ENCODE measurements at regions of chr10 and their contacts with region 1.

Region 1: DNA sequence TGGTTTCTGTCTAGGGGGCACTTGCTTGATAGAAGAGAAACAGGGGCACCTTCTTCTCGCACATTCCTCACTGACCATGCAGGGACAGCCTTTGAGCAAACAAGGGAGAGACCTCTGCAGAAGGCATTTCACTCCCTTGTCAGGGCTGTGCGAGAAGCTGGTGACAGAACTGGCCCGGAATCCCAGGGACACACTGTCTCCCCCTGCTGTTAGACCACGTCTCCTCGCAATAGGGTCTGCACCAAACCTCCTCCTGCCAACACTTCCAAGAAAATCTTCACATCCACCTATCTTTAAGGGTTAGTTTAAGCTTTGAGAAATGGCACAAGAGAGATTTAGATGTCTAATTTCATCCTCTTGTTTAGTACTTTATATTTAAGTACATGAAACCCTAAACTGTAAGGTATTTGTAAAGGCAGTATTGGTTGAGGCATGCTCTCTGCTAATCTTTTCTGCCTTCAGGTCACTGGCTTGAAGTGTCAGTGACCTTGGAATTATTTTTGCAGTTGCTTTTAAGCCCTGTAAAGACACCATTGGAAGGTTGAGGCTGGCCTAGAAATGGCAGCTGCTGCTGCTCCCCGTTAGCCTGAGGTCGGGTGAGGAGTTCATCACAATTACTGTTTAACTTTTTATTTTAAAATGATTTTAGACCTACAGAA is 37.0 kb downstream of the RBM20 start:
- DNase-seq: no peak
- H3K4me3 ChIP-seq: no peak overlapping the region
- H3K27ac ChIP-seq: peak overlapping the region in 1 of 2 donors; percentile 20
- H3K4me1 ChIP-seq: peaks cover 0 to 3% of the 10 kb centered on the region in 2 donors
- H3K27me3 ChIP-seq: no peaks in the 10 kb centered on the region
- CTCF ChIP-seq: peak in 2 of 3 experiments; percentile 48 to 58

Region 2: GRCh38 chr10:110110338-110110737 is 570.8 kb before region 1 on chr10:
- intact Hi-C with region 1: no loop called
- DNase-seq: no peak
- H3K4me3 ChIP-seq: no peak overlapping the region
- H3K27ac ChIP-seq: no peak overlapping the region
- H3K4me1 ChIP-seq: peaks cover 0 to 4% of the 10 kb centered on the region in 2 donors
- H3K27me3 ChIP-seq: no peaks in the 10 kb centered on the region
- CTCF ChIP-seq: no peak

Region 3: DNA sequence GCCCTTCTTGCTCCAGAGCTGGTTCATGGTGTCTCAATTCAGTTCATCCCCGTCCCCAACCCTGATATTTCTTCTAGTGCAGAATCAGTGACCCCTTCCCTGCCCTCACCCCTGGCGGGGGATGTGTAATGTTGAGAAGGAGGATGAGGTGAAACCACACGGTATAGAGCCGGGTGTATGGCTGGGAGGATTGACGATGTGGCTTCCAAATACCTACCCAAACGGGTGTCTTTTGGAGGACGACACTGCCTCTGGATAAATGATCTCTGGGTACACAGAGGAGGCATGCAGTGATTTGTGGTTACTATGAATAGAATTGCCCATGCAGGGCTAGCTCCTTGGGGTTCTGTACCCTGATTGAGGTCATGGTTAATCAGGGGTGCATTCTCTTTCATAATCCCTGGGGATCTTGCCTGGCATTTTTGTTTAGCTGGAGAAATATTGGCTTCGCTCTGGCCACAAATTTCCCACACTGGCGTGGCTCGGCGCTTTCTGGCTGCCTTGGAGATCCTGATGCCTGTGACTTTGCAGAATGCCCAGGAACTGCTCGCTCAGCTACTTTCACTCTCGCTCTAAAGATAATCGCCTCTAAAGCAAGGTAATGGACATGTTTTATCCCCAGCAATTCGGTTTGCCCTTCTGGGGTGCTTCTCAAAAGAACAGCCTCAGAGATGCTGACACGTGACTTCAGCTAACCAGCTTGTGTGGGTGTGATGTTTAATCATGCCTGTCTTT is 52.2 kb after region 1 on chr10:
- intact Hi-C with region 1: loop called (anchors 5 kb)
- DNase-seq: peak in 1 of 2 donors; percentile 62
- H3K4me3 ChIP-seq: peak overlapping the region; percentile 51 to 56
- H3K27ac ChIP-seq: peak overlapping the region; percentile 40 to 55
- H3K4me1 ChIP-seq: peaks cover 0 to 9% of the 10 kb centered on the region in 2 donors
- H3K27me3 ChIP-seq: no peaks in the 10 kb centered on the region
- CTCF ChIP-seq: no peak

Measured in ascending aorta (tissue), 2 donors.